ENCODE measurements at regions of chr19 and their contacts with region 1.

Region 1: GRCh38 chr19:45306518-45307027 is 16.1 kb downstream of the CKM start:
- DNase-seq: no peak
- H3K4me3 ChIP-seq: no peak overlapping the region
- H3K27ac ChIP-seq: no peak overlapping the region
- H3K4me1 ChIP-seq: peaks cover 13% of the 10 kb centered on the region
- H3K27me3 ChIP-seq: no peaks in the 10 kb centered on the region
- CTCF ChIP-seq: no peak

Region 2: DNA sequence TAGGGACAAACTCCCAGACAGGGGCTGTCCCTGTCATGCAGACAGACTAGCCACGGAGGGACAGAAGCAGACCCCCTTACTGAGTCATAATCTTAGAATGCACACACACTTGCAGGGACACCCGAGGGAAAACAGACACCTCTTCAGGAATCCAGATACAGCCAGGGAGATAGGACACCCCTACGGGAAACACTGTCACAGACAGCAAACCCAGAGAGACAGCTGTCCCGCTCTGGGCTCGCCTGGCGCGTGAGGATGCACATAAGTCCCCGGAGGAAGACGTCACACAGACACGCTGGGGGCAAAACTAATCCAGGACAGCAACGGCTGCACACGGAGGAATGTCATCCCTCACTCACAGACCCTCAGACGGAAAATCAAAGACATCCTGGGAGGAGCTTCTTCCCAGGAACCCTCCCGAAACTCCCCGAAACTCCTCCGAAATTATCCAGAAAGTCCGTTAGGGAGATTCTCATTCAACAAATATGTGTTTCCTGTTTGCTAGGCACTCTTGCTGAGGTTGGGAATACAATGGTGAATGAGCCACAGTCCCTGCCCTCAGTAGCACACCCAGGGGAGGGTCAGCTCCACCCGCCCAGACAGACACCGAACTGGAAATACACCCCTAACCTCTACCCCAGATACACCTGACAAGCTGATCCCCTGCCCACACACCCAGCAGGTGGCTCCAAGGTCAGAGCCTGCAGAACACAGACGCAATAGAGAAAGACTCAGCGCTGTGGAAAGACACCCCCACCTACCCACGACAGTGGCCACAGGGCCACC is 430.7 kb before region 1 on chr19:
- CTCF ChIA-PET with region 1: no interaction called
- dilution Hi-C with region 1: no loop called
- in situ Hi-C with region 1: no loop called
- intact Hi-C with region 1: no loop called
- DNase-seq: no peak
- H3K4me3 ChIP-seq: no peak overlapping the region
- H3K27ac ChIP-seq: no peak overlapping the region
- H3K4me1 ChIP-seq: no peaks in the 10 kb centered on the region
- H3K27me3 ChIP-seq: no peaks in the 10 kb centered on the region
- CTCF ChIP-seq: no peak

Region 3: GRCh38 chr19:45264781-45265317 is 41.7 kb before region 1 on chr19:
- CTCF ChIA-PET with region 1: no interaction called
- dilution Hi-C with region 1: loop called (anchors 5 kb)
- in situ Hi-C with region 1: no loop called
- intact Hi-C with region 1: no loop called
- DNase-seq: no peak
- H3K4me3 ChIP-seq: no peak overlapping the region
- H3K27ac ChIP-seq: no peak overlapping the region
- H3K4me1 ChIP-seq: no peaks in the 10 kb centered on the region
- H3K27me3 ChIP-seq: no peaks in the 10 kb centered on the region
- CTCF ChIP-seq: no peak

Region 4: DNA sequence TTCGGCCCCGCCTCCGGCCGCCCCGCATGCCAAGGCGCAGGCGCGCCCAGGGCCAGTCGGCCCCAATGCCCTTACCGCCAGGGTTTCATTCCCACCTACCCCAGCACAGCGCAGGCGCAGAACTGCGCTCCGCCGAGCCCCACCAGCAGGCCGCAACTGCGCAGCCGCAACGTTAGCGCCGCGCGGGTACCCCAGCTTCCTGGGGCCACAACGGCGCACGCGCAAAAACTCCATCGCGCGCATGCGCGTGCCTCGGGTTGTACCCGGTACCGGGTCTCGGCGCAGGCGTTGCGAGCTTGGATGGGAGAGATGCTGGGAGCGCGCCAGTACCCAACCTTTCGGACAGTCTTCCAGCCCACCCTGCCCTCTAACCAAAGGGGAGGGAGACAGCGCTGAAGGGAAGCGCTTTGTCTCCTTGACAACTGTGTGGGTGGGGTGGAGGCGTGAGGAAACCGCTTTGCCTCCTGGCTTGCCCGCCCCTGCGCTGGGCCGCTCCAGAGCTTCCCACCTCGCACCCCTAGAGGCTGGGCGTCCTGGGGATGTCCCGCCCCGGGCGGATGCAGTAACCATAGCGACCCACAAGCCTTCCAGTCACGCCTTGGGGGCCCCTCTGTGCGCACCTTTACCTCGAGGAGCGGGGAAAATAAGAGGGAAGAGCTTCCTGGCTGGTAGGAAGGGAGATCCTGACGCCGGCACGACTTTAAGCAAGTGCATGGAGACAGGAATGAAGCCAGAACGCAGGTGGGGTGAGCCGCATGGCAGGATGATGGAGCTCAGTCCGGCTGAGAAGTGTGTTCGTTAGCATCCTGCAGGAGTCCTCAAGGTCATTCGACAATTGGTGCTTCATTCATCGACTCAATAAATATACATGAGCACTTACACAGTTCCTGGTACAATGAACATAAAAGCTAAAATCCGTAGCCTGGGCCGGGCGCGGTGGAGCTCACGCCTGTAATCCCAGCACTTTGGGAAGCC is 596.4 kb after region 1 on chr19:
- CTCF ChIA-PET with region 1: interaction called, 11 read pairs
- dilution Hi-C with region 1: no loop called
- in situ Hi-C with region 1: no loop called
- intact Hi-C with region 1: no loop called
- DNase-seq: peak; percentile 98
- H3K4me3 ChIP-seq: peak overlapping the region; percentile 66 to 71 (median 68)
- H3K27ac ChIP-seq: no peak overlapping the region
- H3K4me1 ChIP-seq: peaks cover 13% of the 10 kb centered on the region
- H3K27me3 ChIP-seq: no peaks in the 10 kb centered on the region
- CTCF ChIP-seq: no peak

Region 5: DNA sequence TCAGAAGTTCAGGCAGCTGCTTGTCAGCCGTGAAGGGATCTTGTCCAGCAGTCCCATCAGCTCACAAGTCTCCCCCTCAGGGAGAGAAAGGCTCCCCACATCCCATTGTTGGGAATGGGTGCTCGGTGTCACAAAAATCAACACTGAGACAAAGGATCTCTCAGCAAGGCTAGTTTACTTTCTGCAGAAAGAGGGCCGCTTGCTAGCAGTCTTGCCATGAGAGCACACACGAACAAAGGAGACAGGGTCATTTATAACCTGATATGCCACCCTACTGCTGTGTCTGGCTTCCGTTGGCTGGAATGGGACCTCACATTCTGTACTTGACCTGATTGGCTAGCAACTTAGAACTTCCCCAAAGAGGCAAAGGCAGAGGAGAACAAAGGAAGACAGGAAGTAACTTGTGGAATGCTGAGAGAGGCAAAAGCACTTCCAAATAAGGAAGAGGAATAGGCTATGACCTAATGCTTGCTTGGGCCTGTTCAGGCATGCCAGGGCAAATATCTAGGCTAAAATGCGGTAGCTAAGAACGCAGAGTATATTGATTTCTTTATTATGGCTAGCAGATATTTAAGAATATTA is 826.6 kb after region 1 on chr19:
- CTCF ChIA-PET with region 1: no interaction called
- dilution Hi-C with region 1: no loop called
- in situ Hi-C with region 1: no loop called
- intact Hi-C with region 1: no loop called
- DNase-seq: peak; percentile 92
- H3K4me3 ChIP-seq: peak overlapping the region in 2 of 3 experiments; percentile 30 to 35
- H3K27ac ChIP-seq: peak overlapping the region; percentile 86
- H3K4me1 ChIP-seq: peaks cover 26% of the 10 kb centered on the region
- H3K27me3 ChIP-seq: no peaks in the 10 kb centered on the region
- CTCF ChIP-seq: no peak